ENCODE measurements at regions of chr3 and their contacts with region 1.

Region 1: DNA sequence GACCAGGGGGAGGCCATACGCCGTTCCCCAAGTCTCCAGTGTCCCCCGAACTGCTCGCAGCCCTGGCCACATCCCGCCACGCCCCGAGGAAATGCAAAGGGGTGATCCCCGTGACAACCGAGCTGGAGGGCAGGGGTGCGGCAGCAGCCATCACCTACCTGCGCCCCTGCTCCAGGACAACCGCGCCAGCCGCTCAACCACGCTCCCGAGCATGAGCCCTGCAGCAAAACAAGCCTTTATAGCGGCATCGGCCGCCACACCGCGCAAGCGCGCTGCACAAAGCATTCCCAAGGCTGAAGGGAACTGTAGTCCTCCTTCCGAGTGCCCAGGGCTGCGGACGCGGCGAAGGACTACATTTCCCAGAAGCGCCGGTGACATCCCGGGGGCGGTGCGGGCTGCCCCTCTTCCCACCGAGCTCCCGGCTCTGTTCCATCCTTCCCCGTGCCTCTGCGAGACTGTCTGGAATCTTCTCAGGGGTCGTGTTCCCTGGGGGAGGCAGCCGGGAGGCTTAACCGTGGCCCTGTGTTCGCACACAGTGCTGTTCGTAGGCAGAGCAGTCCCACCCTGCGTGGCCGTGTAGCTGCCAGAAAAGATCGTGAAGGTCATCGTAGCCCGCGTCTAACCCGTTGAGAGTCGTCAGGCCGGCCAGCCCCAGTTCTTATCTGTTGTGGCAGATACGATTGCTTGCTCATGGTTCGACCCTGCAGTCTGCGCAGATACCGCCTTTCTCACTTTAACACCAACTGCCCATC is at the start of gene ABCC5:
- DNase-seq: peak; percentile 92 to 94
- ATAC-seq: peak; percentile 94
- total RNA-seq, gene ABCC5: 46.6 to 47.6 TPM

Region 2: DNA sequence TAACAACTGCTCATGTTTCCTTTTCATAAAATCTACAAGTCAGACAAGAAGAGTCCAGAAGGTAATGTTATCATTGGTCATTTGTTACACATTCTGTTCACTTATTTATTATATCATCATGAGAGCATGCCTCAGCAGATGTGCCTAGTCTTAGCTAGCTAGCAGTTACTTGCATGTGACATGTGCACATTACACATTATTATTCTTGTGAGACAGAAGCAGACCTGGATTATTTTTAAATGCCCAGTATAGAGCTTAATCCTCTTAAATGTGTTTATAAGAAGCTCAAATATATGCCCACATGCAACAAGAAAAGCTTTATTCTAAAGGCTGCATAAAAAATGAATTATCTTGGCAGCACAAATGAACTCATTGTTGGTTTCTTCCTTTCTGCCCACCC is 307.6 kb before region 1 on chr3:
- intact Hi-C with region 1: no loop called
- DNase-seq: no peak
- ATAC-seq: no peak

Region 3: DNA sequence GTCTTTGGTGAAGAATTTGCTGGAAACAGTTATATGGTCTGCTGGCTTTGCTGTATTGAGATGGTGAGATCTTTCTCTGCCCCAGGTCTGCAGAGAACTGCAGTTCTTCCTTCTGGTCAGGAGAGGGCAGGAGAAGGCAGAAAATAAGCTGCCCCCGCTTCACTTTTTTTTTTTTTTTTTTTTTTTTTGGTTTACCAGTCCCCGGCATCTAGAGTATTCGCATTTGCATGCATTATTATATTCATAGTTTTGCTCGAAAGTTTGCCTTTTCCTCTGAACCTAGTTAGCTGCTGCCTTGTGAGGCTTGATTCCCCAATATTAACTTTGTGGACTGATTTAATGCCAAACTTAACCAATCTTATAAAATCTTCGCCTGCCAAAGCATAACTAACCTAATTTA is 122.6 kb before region 1 on chr3:
- intact Hi-C with region 1: loop called in 1 of 2 experiments (anchors 10 kb)
- DNase-seq: no peak
- ATAC-seq: peak; percentile 57